Posterior cingulate gyrus (tissue), 11 donors: ENCODE measurements at regions of chr7 and their contacts with region 1.

Region 1: DNA sequence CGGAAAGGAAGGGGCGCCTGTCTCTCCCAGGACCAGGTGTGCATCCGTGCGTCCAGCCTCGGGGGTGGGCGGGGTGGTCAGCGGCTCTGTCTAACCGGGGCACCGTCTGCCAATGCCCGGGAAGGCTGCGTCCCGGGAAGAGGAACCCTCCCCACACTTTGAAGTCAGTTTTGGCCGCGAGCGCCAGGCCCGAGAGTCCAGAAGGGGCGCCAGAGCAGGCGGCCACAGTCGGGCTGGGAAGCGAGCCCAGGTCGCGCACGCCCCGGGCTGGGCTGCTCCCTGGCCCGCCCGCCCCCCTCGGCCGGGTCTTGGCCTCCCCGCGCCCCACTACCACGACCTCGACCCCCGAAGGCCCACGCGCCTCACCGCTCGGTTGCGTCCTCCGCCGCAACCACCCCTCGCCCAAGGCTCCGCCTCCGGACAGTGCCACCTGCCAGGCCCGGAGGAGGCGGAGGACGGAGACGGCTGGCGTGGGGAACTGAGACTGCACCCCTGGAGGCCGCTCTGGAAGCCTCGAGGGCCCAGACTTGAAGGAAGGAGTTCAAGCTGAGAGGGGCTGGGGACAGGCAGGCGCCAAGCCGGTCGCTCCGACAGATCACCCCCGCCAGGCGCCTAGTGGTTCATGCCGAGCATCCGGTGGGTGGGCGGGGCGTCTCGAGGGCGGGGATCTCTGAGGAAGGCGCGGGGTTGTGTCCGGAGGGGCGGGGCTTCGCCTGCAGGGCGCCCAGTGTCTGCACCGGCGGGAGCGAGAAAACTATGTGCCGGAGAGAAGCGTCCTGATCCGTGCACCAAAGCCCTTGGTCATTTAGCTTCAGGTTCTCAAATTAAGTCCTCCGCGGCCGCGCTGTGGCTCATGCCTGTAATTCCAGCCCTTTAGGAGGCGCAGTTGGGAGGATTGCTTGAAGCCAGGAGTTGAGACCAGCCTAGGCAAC is at the start of gene BRAT1:
- DNase-seq: peak; percentile 93 to 99 (median 96)

Region 2: GRCh38 chr7:2477447-2478398 is 77.7 kb before region 1 on chr7:
- intact Hi-C with region 1: loop called (anchors 5 kb)
- DNase-seq: peak in 6 of 10 donors; percentile 30 to 93 (median 62)

Region 3: GRCh38 chr7:2508327-2509215 is 46.8 kb before region 1 on chr7:
- intact Hi-C with region 1: no loop called
- DNase-seq: no peak

Region 4: GRCh38 chr7:2523941-2524807 is 31.2 kb before region 1 on chr7:
- intact Hi-C with region 1: loop called (anchors 2 kb)
- DNase-seq: peak; percentile 81 to 98 (median 88)

Region 5: DNA sequence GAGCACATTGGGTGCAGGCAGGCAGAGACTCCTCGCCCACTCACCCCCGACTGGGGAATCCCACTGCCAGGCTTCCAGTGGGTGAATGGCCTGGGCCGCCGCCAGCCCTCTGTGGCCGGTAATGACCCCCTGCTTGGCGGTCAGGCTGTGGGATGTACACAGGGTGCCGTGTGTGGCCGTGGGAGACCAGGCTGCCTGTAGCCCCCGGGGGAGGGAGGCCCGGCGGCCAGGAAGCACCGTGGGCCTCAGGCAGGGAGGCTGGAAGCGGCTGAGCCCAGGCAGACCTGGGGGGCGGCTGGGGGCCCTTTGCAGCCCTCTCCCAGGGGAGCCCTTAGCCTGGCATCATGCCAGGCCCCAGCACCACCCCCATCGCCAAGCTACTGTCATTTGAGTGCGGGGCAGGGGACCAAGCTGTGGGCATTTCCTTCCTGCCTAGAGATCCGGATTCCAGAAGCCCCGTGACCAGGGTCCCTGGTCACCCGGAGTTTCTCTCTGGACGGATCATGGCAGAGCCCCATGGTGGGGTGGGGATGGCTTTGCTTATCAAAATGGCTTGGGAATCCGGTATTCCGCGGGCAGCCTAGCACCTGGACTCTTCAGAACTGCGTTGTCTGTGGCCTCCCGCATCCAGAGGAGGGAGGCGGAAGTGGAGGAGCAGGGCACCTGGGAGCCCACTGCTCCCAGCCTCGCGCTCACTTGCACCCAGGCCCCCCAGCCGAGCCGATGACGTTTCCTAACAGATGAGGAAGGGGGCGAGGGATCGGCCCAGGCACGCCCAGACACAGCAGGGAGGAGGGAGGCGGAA is 77.5 kb after region 1 on chr7:
- intact Hi-C with region 1: loop called (anchors 5 kb)
- DNase-seq: peak in 2 of 10 donors; percentile 90 to 91